H1 (cell line): ENCODE measurements at regions of chr11 and their contacts with region 1.

Region 1: GRCh38 chr11:65180877-65181568 is 705 bp upstream of the CAPN1 start:
- DNase-seq: peak in 1 of 2 experiments; percentile 90
- H3K4me3 ChIP-seq: peak overlapping the region; percentile 65 to 82 (median 74)
- H3K27ac ChIP-seq: no peak overlapping the region
- H3K4me1 ChIP-seq: peaks cover 7 to 32% (median 21%) of the 10 kb centered on the region in 4 experiments
- H3K27me3 ChIP-seq: no peaks in the 10 kb centered on the region
- CTCF ChIP-seq: peak; percentile 51 to 74 (median 69)
- EP300 ChIP-seq: no peak
- POLR2A ChIP-seq: peak in 1 of 2 experiments; percentile 52; a peak in 2 of 3 replicates
- RAD21 ChIP-seq: peak; percentile 65 to 71

Region 2: DNA sequence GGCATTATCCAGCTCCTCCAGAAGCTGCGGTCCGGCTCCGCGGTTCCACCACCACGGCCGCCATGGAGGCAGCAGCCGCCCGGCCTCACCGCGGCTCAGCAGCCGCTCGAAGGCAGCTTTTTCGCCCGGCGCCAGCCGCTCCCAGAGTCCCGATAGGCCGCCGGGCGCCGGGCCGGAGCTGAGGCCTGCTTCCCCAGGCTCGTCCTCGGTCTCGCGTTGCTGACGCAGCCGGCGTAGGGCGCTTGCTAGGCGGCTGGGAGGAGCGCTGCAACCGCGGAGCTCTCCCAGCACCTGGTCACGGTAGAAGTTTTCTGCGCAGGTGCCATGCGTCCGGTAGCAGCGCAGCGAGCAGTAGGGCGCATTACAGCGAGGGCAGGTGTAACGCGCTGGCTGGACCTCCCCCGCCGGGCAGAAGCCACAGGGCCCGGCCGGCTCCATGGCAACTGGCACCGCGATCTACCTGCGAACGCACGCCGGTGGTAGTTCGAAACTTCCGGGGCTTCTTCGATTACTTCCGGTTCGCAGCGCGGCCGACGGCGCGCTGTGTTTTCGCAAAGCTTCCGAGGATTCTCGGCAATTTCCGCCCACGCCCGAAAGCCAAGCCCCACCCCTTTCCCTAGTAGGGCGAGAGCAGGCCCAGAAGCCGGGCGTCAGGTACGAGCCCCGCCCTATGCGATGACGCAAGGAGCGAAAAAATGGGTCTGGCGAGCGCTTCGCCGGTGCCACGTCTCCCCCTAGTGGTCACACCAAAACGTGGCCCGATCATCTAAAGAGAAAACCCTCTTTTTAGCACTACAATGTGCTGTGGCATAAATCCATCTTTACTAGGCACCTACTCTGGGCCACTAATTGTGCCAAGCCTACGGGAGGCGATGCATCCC is 63.6 kb before region 1 on chr11 and contains the start of gene ZNHIT2:
- CTCF ChIA-PET with region 1: interaction called, 13 read pairs
- POLR2A ChIA-PET with region 1: interaction called, 35 read pairs
- DNase-seq: peak; percentile 98 to 99
- H3K4me3 ChIP-seq: peak within 1 kb of the TSS; percentile 61 to 83 (median 72)
- H3K27ac ChIP-seq: peak within 1 kb of the TSS; percentile 78
- H3K4me1 ChIP-seq: peaks cover 2 to 22% (median 13%) of the 10 kb centered on the region in 4 experiments
- H3K27me3 ChIP-seq: no peaks in the 10 kb centered on the region
- CTCF ChIP-seq: peak in 2 of 3 experiments; percentile 79 to 92; a peak in 3 of 4 replicates
- EP300 ChIP-seq: peak in 1 of 2 experiments; percentile 75; a peak in 1 of 3 replicates
- POLR2A ChIP-seq: peak in 1 of 2 experiments; percentile 89; a peak in 2 of 3 replicates
- RAD21 ChIP-seq: peak; percentile 76 to 80
- total RNA-seq, gene ZNHIT2: 13.0 and 14.8 TPM in 2 replicates

Region 3: GRCh38 chr11:65134386-65135253 is 46.4 kb before region 1 on chr11 and contains the start of gene SYVN1:
- CTCF ChIA-PET with region 1: interaction called, 9 read pairs
- POLR2A ChIA-PET with region 1: interaction called, 26 read pairs
- DNase-seq: peak; percentile 75 to 94
- H3K4me3 ChIP-seq: peak within 1 kb of the TSS; percentile 84 to 94 (median 88)
- H3K27ac ChIP-seq: peak within 1 kb of the TSS; percentile 99
- H3K4me1 ChIP-seq: peaks cover 0 to 13% (median 7%) of the 10 kb centered on the region in 4 experiments; a peak in 6 of 7 replicates
- H3K27me3 ChIP-seq: no peaks in the 10 kb centered on the region
- CTCF ChIP-seq: no peak
- EP300 ChIP-seq: peak in 1 of 2 experiments; percentile 97; a peak in 2 of 3 replicates
- POLR2A ChIP-seq: peak in 1 of 2 experiments; percentile 96; a peak in 1 of 3 replicates
- RAD21 ChIP-seq: no peak
- total RNA-seq, gene SYVN1: 29.4 and 34.0 TPM in 2 replicates

Region 4: DNA sequence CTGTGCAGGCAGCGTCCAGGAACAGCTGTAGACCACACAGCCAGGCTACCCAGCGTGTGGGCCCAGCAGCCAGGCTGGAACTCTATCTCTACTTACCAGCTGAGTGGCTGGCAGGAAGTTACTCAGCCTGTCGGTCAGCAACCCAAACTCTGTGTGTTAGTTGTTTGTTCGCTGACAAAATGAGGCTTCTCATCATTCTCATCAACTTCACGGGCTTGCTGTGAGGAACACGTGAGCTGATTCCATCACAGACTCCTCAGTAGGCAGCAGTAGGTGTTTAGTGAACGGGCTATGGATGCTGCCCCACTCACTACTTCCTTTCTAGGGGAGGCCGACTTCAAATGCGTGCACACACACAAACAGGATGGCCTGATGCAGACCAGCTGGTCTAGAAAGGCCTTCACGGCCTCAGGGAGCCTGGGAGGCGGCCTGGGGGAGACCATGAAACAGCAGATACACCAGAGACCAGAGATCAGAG is 11.8 kb before region 1 on chr11:
- CTCF ChIA-PET with region 1: interaction called, 14 read pairs
- POLR2A ChIA-PET with region 1: interaction called, 24 read pairs
- DNase-seq: no peak
- H3K4me3 ChIP-seq: no peak overlapping the region
- H3K27ac ChIP-seq: no peak overlapping the region
- H3K4me1 ChIP-seq: peaks cover 0 to 6% (median 1%) of the 10 kb centered on the region in 4 experiments; a peak in 2 of 7 replicates
- H3K27me3 ChIP-seq: no peaks in the 10 kb centered on the region
- CTCF ChIP-seq: no peak
- EP300 ChIP-seq: no peak
- POLR2A ChIP-seq: no peak
- RAD21 ChIP-seq: no peak

Region 5: DNA sequence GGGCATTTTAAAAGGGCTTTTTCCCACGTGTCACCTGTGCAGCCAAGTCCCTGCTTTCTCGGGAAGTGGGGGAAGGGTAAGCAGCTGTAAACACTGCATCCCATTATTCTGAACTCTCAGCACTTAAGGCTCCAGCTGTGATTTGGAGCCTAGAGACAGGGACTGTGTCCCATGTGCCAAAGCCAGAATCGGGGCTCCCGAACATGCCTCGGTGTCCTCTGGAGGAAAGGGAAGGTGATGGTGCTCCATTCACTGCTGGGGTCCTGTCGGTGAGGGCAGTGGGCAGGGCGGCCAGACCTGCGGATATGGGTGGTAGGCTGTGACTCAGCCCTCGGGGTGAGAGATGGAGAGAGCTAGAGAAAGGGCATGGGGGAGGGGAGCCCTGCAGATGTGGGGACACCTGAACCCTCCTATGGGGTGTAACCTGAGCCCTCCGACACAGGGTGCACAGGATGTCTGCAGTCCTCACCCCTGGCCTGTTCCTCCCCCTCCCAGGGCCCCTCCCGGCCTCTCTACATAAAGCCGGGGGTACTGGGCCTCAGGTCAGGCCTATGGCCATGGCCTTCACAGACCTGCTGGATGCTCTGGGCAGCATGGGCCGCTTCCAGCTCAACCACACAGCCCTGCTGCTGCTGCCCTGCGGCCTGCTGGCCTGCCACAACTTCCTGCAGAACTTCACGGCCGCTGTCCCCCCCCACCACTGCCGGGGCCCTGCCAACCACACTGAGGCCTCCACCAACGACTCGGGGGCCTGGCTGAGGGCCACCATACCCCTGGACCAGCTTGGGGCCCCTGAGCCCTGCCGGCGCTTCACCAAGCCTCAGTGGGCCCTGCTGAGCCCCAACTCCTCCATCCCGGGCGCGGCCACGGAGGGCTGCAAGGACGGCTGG is 32.5 kb after region 1 on chr11:
- CTCF ChIA-PET with region 1: interaction called, 7 read pairs
- POLR2A ChIA-PET with region 1: interaction called, 21 read pairs
- DNase-seq: peak; percentile 70 to 88
- H3K4me3 ChIP-seq: peak overlapping the region in 3 of 4 experiments; percentile 29 to 52 (median 39); a peak in 5 of 8 replicates
- H3K27ac ChIP-seq: peak overlapping the region; percentile 81; the same call in 1 of the 2 replicates
- H3K4me1 ChIP-seq: peaks cover 5 to 36% (median 29%) of the 10 kb centered on the region in 4 experiments
- H3K27me3 ChIP-seq: no peaks in the 10 kb centered on the region
- CTCF ChIP-seq: no peak
- EP300 ChIP-seq: peak in 1 of 2 experiments; percentile 10; a peak in 1 of 3 replicates
- POLR2A ChIP-seq: peak in 1 of 2 experiments; percentile 88; a peak in 2 of 3 replicates
- RAD21 ChIP-seq: no peak

Region 6: DNA sequence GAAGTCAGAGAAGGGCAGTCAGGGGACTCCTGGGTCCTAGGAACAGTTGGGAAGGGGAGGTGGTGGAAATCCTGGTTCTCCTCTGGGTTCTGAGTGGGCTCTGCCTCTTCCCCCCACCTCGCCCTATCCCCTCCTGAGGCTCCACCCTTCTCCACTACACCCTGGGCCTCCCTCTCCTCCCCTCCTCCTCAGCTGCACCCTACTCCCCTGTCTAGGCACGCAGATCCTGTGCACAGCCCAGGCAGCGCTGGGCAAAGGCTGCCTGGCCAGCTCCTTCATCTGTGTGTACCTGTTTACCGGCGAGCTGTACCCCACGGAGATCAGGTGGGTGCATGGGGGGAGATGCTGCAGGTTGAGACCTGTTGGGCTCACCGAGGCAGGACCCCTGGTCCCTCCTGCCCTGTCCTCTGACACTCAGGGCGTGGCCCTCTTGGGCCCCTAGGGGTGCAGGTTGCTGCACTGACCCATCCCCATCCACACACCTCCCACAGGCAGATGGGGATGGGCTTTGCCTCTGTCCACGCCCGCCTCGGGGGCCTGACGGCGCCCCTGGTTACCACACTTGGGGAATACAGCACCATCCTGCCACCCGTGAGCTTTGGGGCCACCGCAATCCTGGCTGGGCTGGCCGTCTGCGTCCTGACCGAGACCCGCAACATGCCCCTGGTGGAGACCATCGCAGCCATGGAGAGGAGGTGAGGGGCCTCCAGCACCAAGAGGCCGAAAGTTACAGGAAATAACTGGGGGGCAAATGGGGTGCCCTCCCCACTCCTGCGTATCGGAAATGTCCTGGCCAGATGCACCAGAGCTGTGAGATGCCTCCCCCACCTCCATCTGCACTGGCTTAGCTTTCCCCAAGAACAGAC is 55.4 kb after region 1 on chr11:
- CTCF ChIA-PET with region 1: no interaction called
- POLR2A ChIA-PET with region 1: interaction called, 10 read pairs
- DNase-seq: no peak
- H3K4me3 ChIP-seq: no peak overlapping the region
- H3K27ac ChIP-seq: no peak overlapping the region
- H3K4me1 ChIP-seq: no peaks in the 10 kb centered on the region
- H3K27me3 ChIP-seq: no peaks in the 10 kb centered on the region
- CTCF ChIP-seq: no peak
- EP300 ChIP-seq: no peak
- POLR2A ChIP-seq: no peak
- RAD21 ChIP-seq: no peak

Region 7: DNA sequence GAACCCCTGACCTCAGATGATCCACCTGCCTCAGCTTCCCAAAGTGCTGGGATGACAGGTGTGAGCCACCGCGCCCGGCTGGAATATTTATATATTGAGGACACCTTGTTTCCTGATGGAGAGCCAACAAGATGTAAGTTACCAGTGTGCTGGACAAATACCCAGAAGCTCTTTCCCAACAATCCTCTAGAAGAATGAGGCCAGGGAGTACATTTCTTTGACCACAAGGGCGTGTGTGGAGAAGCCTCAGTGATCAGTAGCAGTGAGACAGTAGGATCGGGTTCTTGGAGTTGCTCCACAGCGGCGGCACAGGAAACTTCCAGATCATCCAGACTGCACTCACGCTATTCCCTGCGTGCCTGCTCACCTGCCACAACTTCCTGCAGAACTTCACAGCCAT is 70.5 kb after region 1 on chr11:
- CTCF ChIA-PET with region 1: interaction called, 17 read pairs
- POLR2A ChIA-PET with region 1: interaction called, 3 read pairs
- DNase-seq: no peak
- H3K4me3 ChIP-seq: no peak overlapping the region
- H3K27ac ChIP-seq: no peak overlapping the region
- H3K4me1 ChIP-seq: no peaks in the 10 kb centered on the region; a peak in 2 of 7 replicates
- H3K27me3 ChIP-seq: no peaks in the 10 kb centered on the region
- CTCF ChIP-seq: no peak
- EP300 ChIP-seq: no peak
- POLR2A ChIP-seq: no peak
- RAD21 ChIP-seq: no peak

Region 8: GRCh38 chr11:65280646-65281045 is 99.6 kb after region 1 on chr11:
- CTCF ChIA-PET with region 1: no interaction called
- POLR2A ChIA-PET with region 1: no interaction called
- DNase-seq: no peak
- H3K4me3 ChIP-seq: no peak overlapping the region
- H3K27ac ChIP-seq: no peak overlapping the region
- H3K4me1 ChIP-seq: no peaks in the 10 kb centered on the region; a peak in 1 of 7 replicates
- H3K27me3 ChIP-seq: no peaks in the 10 kb centered on the region
- CTCF ChIP-seq: no peak
- EP300 ChIP-seq: no peak
- POLR2A ChIP-seq: no peak
- RAD21 ChIP-seq: no peak